Mammary epithelial cell (primary cell): ENCODE measurements at regions of chr16 and their contacts with region 1.

Region 1: GRCh38 chr16:12901597-12902461 is at the start of gene SHISA9:
- DNase-seq: peak; percentile 39
- H3K4me3 ChIP-seq: peak within 1 kb of the TSS; percentile 62 to 83 (median 66)
- H3K27ac ChIP-seq: no peak within 1 kb of the TSS
- H3K4me1 ChIP-seq: peaks cover 31% of the 10 kb centered on the region
- H3K27me3 ChIP-seq: no peaks in the 10 kb centered on the region
- CTCF ChIP-seq: no peak
- total RNA-seq, gene SHISA9: 15.7 to 60.5 TPM

Region 2: DNA sequence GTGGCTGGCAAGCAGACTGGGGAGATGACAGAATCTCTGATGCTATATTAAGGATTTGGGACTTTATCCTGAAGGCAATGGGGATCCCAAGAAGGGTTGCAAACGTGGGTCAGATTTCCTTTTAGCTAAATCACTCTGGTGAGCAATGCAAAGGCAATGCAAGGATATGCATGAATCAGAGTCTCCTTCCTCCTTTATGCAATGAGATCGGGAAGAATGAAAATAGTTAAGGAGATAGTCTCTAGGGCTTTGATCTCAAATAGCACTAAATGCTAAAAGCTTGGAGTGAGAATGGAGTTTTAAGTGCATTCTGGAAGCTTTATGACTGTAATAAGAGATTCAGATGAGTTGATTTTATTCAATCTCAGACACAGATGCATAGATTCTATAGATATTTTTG is 27.6 kb before region 1 on chr16:
- CTCF ChIA-PET with region 1: no interaction called
- dilution Hi-C with region 1: no loop called
- in situ Hi-C with region 1: no loop called
- intact Hi-C with region 1: no loop called
- DNase-seq: peak; percentile 73
- H3K4me3 ChIP-seq: no peak overlapping the region
- H3K27ac ChIP-seq: no peak overlapping the region
- H3K4me1 ChIP-seq: peaks cover 7% of the 10 kb centered on the region
- H3K27me3 ChIP-seq: no peaks in the 10 kb centered on the region
- CTCF ChIP-seq: no peak

Region 3: DNA sequence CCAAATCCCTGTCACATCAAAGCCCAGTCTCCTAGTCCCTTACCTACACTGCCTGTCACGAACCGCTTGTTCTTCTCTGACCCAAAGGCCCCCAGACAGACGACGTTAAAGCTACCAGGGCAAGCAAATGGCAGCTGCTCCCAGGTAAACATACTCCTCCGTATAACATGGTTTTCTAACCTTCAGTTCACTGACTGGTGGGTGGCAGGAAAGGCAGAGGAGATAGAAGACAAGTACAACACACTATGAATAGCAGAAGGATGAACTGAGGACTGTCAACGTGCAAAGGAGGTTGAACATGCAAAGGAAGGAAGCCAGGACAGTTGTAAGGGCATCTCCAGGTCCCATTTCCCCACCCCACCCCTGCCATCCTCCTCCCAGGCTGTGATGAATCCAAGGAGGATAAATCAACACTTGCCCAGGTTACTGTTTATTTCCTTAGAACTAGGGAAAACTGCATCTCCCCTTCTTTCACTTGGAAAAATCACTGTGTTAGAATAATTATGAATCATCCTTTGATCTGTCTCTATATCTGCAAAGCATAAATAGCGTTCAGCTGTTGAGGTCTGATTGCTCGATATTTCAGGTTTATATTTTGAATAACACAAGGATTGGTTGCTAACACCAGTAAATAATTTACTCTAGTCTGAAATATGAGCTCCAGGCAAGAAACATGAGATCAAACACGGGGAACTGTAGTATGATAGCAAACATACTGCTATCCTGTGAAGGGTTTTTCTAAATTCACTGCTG is 449.5 kb after region 1 on chr16:
- CTCF ChIA-PET with region 1: no interaction called
- dilution Hi-C with region 1: no loop called
- in situ Hi-C with region 1: no loop called
- intact Hi-C with region 1: no loop called
- DNase-seq: no peak
- H3K4me3 ChIP-seq: no peak overlapping the region
- H3K27ac ChIP-seq: no peak overlapping the region
- H3K4me1 ChIP-seq: no peaks in the 10 kb centered on the region
- H3K27me3 ChIP-seq: no peaks in the 10 kb centered on the region
- CTCF ChIP-seq: no peak

Region 4: GRCh38 chr16:13436641-13437412 is 535.0 kb after region 1 on chr16:
- CTCF ChIA-PET with region 1: no interaction called
- dilution Hi-C with region 1: no loop called
- in situ Hi-C with region 1: no loop called
- intact Hi-C with region 1: loop called (anchors 5 kb)
- DNase-seq: peak; percentile 64
- H3K4me3 ChIP-seq: no peak overlapping the region
- H3K27ac ChIP-seq: no peak overlapping the region
- H3K4me1 ChIP-seq: peaks cover 14% of the 10 kb centered on the region
- H3K27me3 ChIP-seq: no peaks in the 10 kb centered on the region
- CTCF ChIP-seq: no peak